CD14-positive monocyte (primary cell): ENCODE measurements at regions of chr1 and their contacts with region 1.

Region 1: DNA sequence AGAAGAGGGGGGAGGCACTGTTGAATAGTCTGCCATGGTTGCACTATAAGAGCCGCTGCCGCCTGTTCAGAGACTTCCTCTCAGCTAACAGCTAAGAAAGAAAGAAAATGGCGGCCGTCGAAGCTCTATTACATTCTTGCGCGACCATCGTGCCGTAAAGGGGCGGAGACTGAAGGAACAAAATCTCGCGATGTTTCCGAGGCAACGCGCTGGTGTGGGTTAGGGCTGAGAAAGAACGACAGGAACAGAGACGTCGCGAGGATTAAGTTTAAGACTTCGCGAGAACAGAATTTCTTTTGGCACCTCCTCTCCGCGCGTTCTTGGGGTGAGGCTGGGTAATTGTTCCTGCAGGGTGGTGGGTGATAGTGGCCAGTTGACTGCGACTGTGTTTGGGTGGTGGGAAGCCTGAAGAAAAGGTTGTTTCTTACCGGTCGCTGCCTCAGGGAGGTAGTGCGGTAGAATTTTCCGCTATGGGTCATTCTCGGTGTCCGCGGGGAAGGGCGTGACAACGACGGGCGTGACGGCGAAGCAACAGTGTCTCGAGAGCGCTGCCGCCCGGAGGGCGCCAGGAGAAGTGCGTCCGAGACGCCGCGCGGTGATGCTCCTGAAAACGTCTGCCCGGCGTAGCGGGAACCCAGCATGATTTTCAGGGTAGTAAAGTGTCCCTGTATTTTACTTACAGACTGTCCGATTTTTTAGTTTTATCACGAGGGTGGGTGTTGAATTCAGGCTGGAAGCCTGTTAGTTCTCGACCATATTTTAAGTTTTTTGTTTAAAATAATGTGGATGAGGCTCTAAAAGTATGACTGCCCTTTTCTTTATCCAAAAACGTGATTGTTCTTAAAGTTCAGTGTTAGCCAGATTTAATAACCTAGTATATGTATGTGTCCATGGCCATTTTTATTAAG is at the start of gene FUBP1:
- DNase-seq: peak; percentile 98 to 99 (median 99)
- H3K4me3 ChIP-seq: peak within 1 kb of the TSS; percentile 88 to 99 (median 97)
- H3K4me3 Mint-ChIP-seq: no peak within 1 kb of the TSS
- H3K27ac ChIP-seq: peak within 1 kb of the TSS; percentile 97 to 100
- H3K27ac Mint-ChIP-seq: no peak within 1 kb of the TSS
- H3K4me1 ChIP-seq: peaks cover 26 to 33% of the 10 kb centered on the region in 2 donors
- H3K4me1 Mint-ChIP-seq: peaks cover 10% of the 10 kb centered on the region
- H3K27me3 ChIP-seq: no peaks in the 10 kb centered on the region
- H3K27me3 Mint-ChIP-seq: no peaks in the 10 kb centered on the region
- CTCF ChIP-seq: peak; percentile 76
- polyA plus RNA-seq, gene FUBP1: 16.5 to 47.3 (median 16.5) TPM

Region 2: GRCh38 chr1:78004719-78005447 is 25.7 kb after region 1 on chr1 and contains the start of gene DNAJB4:
- intact Hi-C with region 1: loop called in 1 of 2 experiments (anchors 2 kb)
- DNase-seq: peak; percentile 89 to 92 (median 91)
- H3K4me3 ChIP-seq: peak within 1 kb of the TSS; percentile 57 to 99 (median 83)
- H3K4me3 Mint-ChIP-seq: peak within 1 kb of the TSS; percentile 76 to 94
- H3K27ac ChIP-seq: peak within 1 kb of the TSS; percentile 57 to 95
- H3K27ac Mint-ChIP-seq: peak within 1 kb of the TSS; percentile 96 to 99 (median 97)
- H3K4me1 ChIP-seq: peaks cover 2 to 25% of the 10 kb centered on the region in 2 donors
- H3K4me1 Mint-ChIP-seq: peaks cover 14% of the 10 kb centered on the region
- H3K27me3 ChIP-seq: no peaks in the 10 kb centered on the region
- H3K27me3 Mint-ChIP-seq: peaks cover 0 to 1% (median 0%) of the 10 kb centered on the region in 3 donors
- CTCF ChIP-seq: no peak
- polyA plus RNA-seq, gene DNAJB4: 2.8 to 4.0 (median 3.6) TPM